ENCODE measurements at regions of chr5 and their contacts with region 1.

Region 1: DNA sequence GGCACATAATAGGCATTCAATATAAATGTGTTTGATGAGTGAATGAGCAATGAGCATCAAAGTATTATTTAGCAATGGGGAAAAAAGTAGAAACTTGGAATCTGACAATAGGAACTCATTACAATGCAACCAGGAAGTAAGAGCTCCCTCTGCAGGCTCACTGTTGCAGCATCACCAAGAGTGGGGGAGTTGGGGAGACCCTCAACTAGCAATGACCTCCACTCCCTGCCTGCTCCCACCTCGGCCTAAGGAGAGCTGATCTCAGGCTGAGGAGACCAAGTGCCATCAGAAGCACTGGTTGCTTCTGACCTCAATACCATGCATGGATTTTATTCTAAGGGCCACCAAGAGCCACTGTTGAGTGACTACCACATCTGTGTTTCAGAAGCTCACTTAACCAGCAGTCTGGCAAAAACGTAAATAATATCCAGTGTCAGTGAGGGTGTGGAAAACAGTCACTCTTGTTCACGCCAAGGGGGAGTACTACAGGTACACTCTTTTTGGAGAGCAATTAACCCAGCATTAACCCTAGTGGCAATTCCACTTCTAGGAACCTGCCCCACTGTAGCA is 8.0 kb downstream of the VDAC1 start:
- DNase-seq: peak; percentile 45

Region 2: DNA sequence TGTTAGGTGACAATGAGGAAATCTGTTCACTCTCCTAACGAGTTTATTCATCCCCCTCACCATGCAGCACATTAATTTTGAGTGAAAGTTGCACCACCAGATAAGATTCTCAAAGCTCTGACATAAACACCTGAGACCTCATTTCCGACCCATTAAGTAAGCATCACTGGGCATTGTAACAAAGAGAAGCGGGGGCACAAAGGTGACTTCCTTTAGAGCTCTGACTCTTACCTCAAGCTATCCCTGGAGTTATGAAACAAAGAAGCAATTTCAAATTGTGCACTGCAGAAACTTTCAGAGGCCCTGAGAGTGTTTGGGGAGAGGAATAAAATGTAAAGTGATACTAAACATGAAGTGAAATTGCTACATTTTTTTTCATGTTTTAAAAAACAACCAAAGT is 57.8 kb before region 1 on chr5:
- CTCF ChIA-PET with region 1: no interaction called
- POLR2A ChIA-PET with region 1: no interaction called
- DNase-seq: no peak

Region 3: GRCh38 chr5:133977161-133977787 is 19.5 kb before region 1 on chr5:
- CTCF ChIA-PET with region 1: interaction called, 20 read pairs
- POLR2A ChIA-PET with region 1: no interaction called
- DNase-seq: no peak

Region 4: DNA sequence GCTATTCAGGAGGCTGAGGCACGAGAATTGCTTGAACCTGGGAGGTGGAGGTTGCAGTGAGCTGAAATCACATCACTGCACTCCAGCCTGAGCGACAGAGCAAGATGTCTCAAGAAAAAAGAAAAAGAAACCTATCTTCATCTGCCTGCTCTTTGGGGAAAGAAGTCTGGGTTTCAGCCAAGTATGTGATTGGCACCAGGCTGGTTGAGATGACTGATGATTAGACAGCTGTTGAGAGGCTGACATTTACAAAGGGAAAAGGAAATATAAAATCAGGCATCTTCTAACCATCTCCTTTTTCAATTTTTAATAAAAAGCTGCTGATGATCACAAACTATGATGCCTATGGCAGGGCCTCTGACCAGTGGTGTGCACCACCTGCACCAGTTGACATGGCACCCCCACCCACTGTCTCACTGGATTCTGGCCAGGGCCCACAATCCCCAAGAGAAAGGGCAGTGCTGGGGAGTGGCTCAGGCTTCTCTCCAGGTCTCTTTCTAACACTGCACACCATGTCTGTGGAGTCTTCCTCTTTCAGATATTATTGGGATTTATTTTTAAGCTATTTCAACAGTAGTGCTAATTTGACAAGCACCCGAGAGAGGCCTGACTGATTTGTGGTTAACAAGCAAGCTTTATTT is 11.1 kb before region 1 on chr5:
- CTCF ChIA-PET with region 1: interaction called, 20 read pairs
- POLR2A ChIA-PET with region 1: interaction called, 5 read pairs
- DNase-seq: no peak

Region 5: GRCh38 chr5:134125039-134126015 is 128.6 kb after region 1 on chr5:
- CTCF ChIA-PET with region 1: no interaction called
- POLR2A ChIA-PET with region 1: no interaction called
- DNase-seq: no peak

Measured in HEK293T (cell line).